ENCODE measurements at regions of chr3 and their contacts with region 1.

Region 1: DNA sequence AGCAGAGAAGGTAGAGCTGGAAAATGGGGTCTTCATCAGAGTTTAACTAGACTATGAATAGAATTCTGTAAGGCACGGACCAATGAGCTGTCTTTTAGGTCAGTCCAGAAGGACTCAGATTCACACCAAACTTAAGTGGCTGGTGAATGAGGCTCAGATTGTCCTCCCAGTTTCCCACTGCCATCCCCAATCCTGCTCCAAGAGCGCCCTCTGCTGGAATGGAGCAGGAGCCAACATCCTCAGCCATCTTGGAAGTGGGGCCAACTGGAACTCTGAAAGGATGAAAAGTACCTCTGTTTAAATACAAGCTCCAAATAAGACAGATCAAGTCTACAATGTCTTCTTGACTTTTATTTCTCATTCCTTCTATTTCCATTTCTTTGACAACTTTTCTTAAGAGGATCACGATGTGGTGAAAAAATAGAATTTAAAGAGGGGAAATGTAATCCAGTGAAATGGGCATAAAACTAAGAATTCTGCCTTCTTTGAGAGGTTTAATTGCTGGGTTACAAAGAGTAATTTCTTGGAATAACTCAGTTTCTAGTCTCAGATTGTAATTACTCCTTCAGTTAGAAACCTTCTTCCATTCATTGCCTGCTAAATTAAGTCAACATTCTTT is 217.1 kb upstream of the TPRG1 start:
- DNase-seq: peak; percentile 84
- H3K4me3 ChIP-seq: no peak overlapping the region
- H3K27ac ChIP-seq: no peak overlapping the region
- H3K4me1 ChIP-seq: peaks cover 12% of the 10 kb centered on the region
- CTCF ChIP-seq: peak; percentile 99

Region 2: DNA sequence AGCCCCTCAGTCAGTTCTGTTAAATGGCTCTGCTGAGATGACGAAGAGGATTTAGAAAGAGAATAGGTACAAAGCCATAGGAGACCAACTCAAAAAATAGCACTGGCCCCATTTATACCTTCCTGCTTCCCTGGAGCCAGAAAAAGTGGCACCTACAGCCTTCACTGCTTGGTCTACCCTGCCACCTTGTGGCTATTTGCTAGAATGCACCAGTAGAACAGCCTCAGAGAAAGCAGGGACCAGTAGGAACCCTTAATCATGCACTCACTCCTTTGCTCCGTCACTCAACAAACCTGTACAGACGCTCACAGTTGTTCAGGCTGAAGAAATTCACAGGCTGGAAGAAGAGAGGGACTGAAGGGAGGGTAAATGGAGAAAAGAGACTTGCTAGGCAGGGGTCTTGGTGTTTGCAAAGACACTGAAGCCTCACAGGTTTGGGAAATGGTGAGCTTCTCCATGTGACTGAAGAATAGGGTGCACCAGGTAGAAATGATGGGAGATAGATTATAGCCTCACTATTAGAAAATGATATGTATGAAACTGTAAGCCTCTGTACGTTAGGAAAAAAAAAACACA is 1240.2 kb before region 1 on chr3:
- CTCF ChIA-PET with region 1: no interaction called
- POLR2A ChIA-PET with region 1: no interaction called
- intact Hi-C with region 1: loop called (anchors 5 kb)
- DNase-seq: peak; percentile 82
- H3K4me3 ChIP-seq: no peak overlapping the region
- H3K27ac ChIP-seq: no peak overlapping the region
- H3K4me1 ChIP-seq: peaks cover 13% of the 10 kb centered on the region
- CTCF ChIP-seq: peak; percentile 98

Region 3: DNA sequence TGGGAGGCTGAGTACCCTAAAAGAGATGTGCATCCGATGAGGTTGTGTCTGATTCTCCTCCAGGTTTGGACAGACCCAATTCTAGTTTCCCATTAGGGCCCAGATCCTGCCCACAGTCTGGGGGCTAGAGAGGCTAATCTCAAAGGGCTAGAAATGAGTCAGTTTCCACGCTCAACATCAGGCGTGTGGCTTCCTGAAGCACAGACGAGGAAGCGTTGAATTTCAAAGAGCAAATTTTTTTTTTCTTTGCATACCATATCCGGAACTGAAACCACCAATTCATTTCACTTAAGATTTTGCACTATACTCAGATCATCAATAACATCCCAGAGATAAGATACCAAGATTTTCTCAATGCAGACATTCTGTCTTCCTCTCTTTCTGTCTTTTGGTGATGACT is 1035.7 kb before region 1 on chr3:
- CTCF ChIA-PET with region 1: no interaction called
- POLR2A ChIA-PET with region 1: no interaction called
- intact Hi-C with region 1: loop called (anchors 10 kb)
- DNase-seq: peak; percentile 93
- H3K4me3 ChIP-seq: peak overlapping the region; percentile 55
- H3K27ac ChIP-seq: peak overlapping the region; percentile 97
- H3K4me1 ChIP-seq: peaks cover 99% of the 10 kb centered on the region
- CTCF ChIP-seq: no peak

Region 4: DNA sequence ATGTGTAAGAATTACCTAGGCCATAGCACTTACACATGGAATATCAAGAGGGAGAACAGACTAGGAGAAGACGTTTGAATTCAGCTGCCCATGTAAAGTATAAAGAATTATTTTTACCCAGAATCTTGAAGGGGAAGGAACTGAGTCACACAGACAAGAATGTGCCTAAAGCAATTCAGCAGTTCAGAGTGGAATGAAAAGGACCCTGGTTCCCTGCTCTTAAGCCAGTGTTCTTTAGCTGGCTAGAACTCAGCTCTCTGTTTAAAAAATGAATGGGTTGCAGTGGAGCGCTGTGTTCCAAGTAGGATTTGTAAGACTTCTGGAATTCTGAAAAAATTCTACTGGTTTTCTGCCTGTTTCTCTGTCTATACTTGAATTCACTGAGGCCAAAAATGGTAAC is 360.6 kb before region 1 on chr3:
- CTCF ChIA-PET with region 1: no interaction called
- POLR2A ChIA-PET with region 1: no interaction called
- intact Hi-C with region 1: loop called (anchors 10 kb)
- DNase-seq: no peak
- H3K4me3 ChIP-seq: no peak overlapping the region
- H3K27ac ChIP-seq: no peak overlapping the region
- H3K4me1 ChIP-seq: peaks cover 3% of the 10 kb centered on the region
- CTCF ChIP-seq: no peak

Region 5: GRCh38 chr3:188752850-188753249 is 201.8 kb before region 1 on chr3:
- CTCF ChIA-PET with region 1: interaction called, 3 read pairs
- POLR2A ChIA-PET with region 1: interaction called, 4 read pairs
- intact Hi-C with region 1: loop called (anchors 5 kb)
- DNase-seq: peak; percentile 76
- H3K4me3 ChIP-seq: peak overlapping the region; percentile 54
- H3K27ac ChIP-seq: peak overlapping the region; percentile 89
- H3K4me1 ChIP-seq: peaks cover 68% of the 10 kb centered on the region
- CTCF ChIP-seq: no peak

Region 6: DNA sequence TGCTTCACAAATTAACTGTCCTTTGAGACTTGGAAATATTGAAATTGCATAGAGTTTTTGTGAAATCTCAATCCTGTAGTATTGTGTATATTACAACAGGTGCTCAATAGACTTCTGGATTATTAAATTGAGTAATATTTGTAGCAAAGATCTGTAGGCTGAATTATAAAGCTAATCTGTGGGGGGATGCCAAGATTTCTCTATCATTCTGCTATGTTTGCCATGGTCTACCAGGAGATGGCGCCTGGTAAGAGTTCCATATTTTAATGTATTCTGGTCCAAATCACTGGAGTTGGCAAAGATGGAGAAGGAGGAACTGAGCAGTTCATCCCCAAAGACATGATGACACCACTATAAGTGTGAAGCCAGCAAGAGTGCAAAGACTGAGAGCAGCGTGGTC is 123.8 kb before region 1 on chr3:
- CTCF ChIA-PET with region 1: interaction called, 3 read pairs
- POLR2A ChIA-PET with region 1: no interaction called
- intact Hi-C with region 1: loop called (anchors 5 kb)
- DNase-seq: peak; percentile 3
- H3K4me3 ChIP-seq: no peak overlapping the region
- H3K27ac ChIP-seq: no peak overlapping the region
- H3K4me1 ChIP-seq: peaks cover 7% of the 10 kb centered on the region
- CTCF ChIP-seq: peak; percentile 71

Region 7: DNA sequence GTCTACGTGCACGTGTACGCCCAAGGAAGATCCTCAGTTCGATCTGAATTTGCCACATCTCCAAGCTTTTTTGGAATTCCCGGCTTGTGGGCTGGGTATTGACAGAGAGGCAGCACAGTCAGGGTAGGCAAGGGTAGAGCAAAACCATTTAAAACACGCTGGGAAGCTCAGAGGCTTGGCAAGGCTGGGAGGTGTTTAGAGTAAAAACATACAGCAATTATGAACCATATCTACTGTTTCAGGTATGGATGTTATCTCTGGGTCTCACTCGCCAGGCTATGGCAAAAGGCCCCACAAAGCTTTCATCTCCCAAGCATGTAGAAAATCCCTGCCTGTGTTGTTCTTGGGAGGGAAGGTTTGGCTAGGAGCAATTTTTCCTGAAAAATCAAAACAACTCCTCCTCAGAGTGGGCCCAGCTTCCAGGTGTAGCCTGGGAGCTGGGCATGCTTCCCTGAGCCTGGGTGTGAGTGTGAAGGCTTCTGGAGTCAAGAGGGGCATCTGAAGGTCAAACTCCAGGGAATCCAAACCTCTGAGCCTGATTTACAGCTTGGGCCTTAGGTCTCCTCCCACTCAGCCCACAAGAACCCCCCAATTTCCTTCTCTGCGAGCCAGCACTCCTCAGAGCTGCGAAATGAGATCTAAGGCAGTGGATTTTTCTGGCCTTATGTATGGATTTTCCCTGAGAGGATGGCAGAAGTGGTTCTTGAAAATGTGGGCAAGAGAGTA is 27.8 kb before region 1 on chr3:
- CTCF ChIA-PET with region 1: no interaction called
- POLR2A ChIA-PET with region 1: no interaction called
- intact Hi-C with region 1: no loop called
- DNase-seq: no peak
- H3K4me3 ChIP-seq: no peak overlapping the region
- H3K27ac ChIP-seq: no peak overlapping the region
- H3K4me1 ChIP-seq: peaks cover 10% of the 10 kb centered on the region
- CTCF ChIP-seq: no peak